Naive thymus-derived CD4-positive, alpha-beta T cell (primary cell): ENCODE measurements at regions of chr11 and their contacts with region 1.

Region 1: DNA sequence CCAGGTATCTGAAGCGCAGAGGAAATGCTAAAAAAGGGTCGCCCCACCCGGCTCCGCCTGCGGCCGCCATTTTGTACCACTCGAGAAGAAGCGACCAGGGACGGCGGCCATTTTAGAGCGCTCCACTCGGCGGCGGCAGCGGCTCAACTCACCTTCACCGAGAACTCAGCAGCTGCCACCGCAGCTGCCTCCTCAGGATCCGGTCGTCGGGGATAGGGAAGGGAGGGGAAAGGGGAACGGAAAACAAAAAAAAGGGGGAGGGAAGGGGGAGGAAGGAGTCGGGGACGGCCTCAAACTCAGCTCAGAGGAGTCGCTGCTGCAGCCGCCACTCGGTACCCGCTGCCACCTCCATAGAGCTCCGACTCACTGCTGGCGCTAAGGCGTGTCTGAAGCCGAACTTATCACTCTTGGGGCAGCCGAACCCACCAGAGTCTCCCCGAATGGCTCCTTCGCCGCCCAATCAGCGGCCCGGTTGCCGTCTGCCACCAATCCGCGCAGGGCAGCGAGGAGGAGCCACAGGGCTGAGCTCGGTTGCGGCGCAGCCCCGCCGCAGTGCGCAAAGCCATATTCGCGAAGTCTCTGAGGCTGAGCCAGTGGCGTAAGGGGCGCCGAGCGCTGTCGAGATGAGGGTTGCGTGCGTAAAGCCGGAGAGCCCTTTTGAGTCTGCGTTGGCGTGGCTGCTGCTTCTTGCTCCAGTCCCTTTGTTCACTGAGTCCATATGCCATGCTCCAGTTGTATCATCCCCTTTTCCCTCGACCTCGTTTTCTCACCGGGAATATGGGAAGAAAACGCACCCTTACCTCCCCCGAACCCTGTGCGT is at the start of gene EIF4G2:
- DNase-seq: peak; percentile 97 to 99 (median 99)
- ATAC-seq: peak; percentile 95
- H3K4me3 ChIP-seq: peak within 1 kb of the TSS; percentile 98
- H3K4me3 Mint-ChIP-seq: peak within 1 kb of the TSS; percentile 93 to 98 (median 97)
- H3K27ac ChIP-seq: peak within 1 kb of the TSS; percentile 95
- H3K27ac Mint-ChIP-seq: peak within 1 kb of the TSS; percentile 95 to 99 (median 98)
- H3K4me1 ChIP-seq: peaks cover 29 to 37% of the 10 kb centered on the region in 2 donors
- H3K4me1 Mint-ChIP-seq: peaks cover 25 to 53% (median 43%) of the 10 kb centered on the region in 7 donors
- H3K27me3 ChIP-seq: no peaks in the 10 kb centered on the region
- H3K27me3 Mint-ChIP-seq: peaks cover 0 to 5% (median 0%) of the 10 kb centered on the region in 5 donors
- total RNA-seq, gene EIF4G2: 596 to 843 (median 720) TPM

Region 2: GRCh38 chr11:10750838-10751580 is 57.8 kb before region 1 on chr11 and contains the start of gene CTR9:
- CTCF ChIA-PET with region 1: interaction called, 4 read pairs
- POLR2A ChIA-PET with region 1: interaction called, 23 read pairs
- intact Hi-C with region 1: loop called (anchors 1 kb)
- DNase-seq: peak; percentile 78 to 94 (median 88)
- ATAC-seq: peak; percentile 96
- H3K4me3 ChIP-seq: peak within 1 kb of the TSS; percentile 79
- H3K4me3 Mint-ChIP-seq: peak within 1 kb of the TSS; percentile 95 to 99 (median 97)
- H3K27ac ChIP-seq: peak within 1 kb of the TSS; percentile 85
- H3K27ac Mint-ChIP-seq: peak within 1 kb of the TSS; percentile 90 to 96 (median 91)
- H3K4me1 ChIP-seq: peaks cover 7 to 8% of the 10 kb centered on the region in 2 donors
- H3K4me1 Mint-ChIP-seq: peaks cover 12 to 36% (median 31%) of the 10 kb centered on the region in 7 donors
- H3K27me3 ChIP-seq: no peaks in the 10 kb centered on the region
- H3K27me3 Mint-ChIP-seq: no peaks in the 10 kb centered on the region
- total RNA-seq, gene CTR9: 23.8 to 64.0 (median 47.8) TPM

Region 3: GRCh38 chr11:10824888-10825287 is 16.1 kb after region 1 on chr11:
- CTCF ChIA-PET with region 1: interaction called, 4 read pairs
- POLR2A ChIA-PET with region 1: interaction called, 49 read pairs
- intact Hi-C with region 1: no loop called
- DNase-seq: no peak
- ATAC-seq: peak; percentile 63
- H3K4me3 ChIP-seq: no peak overlapping the region
- H3K4me3 Mint-ChIP-seq: peak overlapping the region in 6 of 10 donors; percentile 12 to 66 (median 20)
- H3K27ac ChIP-seq: no peak overlapping the region
- H3K27ac Mint-ChIP-seq: peak overlapping the region in 3 of 9 donors; percentile 44 to 74 (median 50)
- H3K4me1 ChIP-seq: no peaks in the 10 kb centered on the region
- H3K4me1 Mint-ChIP-seq: peaks cover 2 to 19% (median 8%) of the 10 kb centered on the region in 7 donors
- H3K27me3 ChIP-seq: no peaks in the 10 kb centered on the region
- H3K27me3 Mint-ChIP-seq: no peaks in the 10 kb centered on the region

Region 4: GRCh38 chr11:10857709-10858438 is 49.1 kb after region 1 on chr11 and contains the start of gene ZBED5:
- CTCF ChIA-PET with region 1: interaction called, 10 read pairs
- POLR2A ChIA-PET with region 1: interaction called, 416 read pairs
- intact Hi-C with region 1: loop called (anchors 1 kb)
- DNase-seq: peak; percentile 93 to 97 (median 96)
- ATAC-seq: peak; percentile 94
- H3K4me3 ChIP-seq: peak within 1 kb of the TSS; percentile 91
- H3K4me3 Mint-ChIP-seq: peak within 1 kb of the TSS; percentile 94 to 100 (median 99)
- H3K27ac ChIP-seq: peak within 1 kb of the TSS; percentile 91
- H3K27ac Mint-ChIP-seq: peak within 1 kb of the TSS; percentile 98 to 100 (median 100)
- H3K4me1 ChIP-seq: peaks cover 5 to 9% of the 10 kb centered on the region in 2 donors
- H3K4me1 Mint-ChIP-seq: peaks cover 20 to 73% (median 60%) of the 10 kb centered on the region in 7 donors
- H3K27me3 ChIP-seq: no peaks in the 10 kb centered on the region
- H3K27me3 Mint-ChIP-seq: peaks cover 0 to 2% (median 0%) of the 10 kb centered on the region in 5 donors
- total RNA-seq, gene ZBED5: 56.7 to 146 (median 94.0) TPM

Region 5: DNA sequence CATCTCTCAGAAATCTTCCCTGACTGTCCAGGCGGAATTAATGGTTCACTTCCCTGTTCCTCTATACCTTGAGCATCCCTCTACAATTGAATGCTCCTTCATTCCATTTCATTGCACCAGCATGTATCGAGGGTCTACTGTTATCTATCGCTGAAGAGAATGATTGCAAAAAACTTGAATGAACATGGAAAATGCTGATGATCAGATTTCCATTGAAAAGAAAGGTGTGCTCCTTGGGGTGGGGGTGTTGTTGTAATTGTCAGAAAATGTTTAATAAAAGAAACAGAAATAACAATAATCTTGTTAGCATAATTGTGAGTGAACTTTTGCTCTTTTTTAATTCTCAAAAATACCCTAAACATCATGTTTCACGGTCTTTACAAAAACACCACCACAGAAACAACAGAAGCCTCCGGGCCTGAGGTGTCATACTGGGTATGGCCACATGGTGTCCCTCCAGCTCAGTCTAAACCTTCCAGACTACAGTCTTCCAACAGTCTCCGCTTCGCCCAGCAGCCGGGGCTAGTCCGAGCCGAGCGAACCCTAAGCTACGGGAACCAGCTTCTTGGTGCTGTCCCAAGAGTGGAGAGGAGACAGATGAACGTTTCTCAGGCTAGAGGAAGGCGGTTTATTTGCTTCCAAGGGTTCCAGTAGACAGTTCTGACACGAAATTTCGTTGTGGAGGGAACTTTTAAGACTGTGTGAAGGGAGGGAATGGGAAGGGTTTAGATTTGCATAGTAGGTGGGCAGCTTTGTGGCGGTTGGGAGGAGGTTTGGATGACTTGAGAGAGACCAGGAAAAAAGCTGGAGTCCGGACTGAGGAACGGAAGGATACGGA is 124.9 kb after region 1 on chr11:
- CTCF ChIA-PET with region 1: interaction called, 3 read pairs
- POLR2A ChIA-PET with region 1: interaction called, 7 read pairs
- intact Hi-C with region 1: loop called (anchors 5 kb)
- DNase-seq: peak; percentile 55 to 80 (median 74)
- ATAC-seq: peak; percentile 95
- H3K4me3 ChIP-seq: peak overlapping the region; percentile 62
- H3K4me3 Mint-ChIP-seq: peak overlapping the region; percentile 77 to 92 (median 90)
- H3K27ac ChIP-seq: no peak overlapping the region
- H3K27ac Mint-ChIP-seq: peak overlapping the region in 5 of 9 donors; percentile 12 to 77 (median 33)
- H3K4me1 ChIP-seq: peaks cover 0 to 6% of the 10 kb centered on the region in 2 donors
- H3K4me1 Mint-ChIP-seq: peaks cover 10 to 21% (median 17%) of the 10 kb centered on the region in 7 donors
- H3K27me3 ChIP-seq: peaks cover 3 to 5% of the 10 kb centered on the region in 2 donors
- H3K27me3 Mint-ChIP-seq: peaks cover 9 to 63% (median 29%) of the 10 kb centered on the region in 5 donors